ENCODE measurements at regions of chr21 and their contacts with region 1.

Region 1: GRCh38 chr21:33578959-33579542 is 9.4 kb downstream of the DONSON start:
- DNase-seq: peak; percentile 30
- ATAC-seq: peak; percentile 23
- H3K4me3 ChIP-seq: no peak overlapping the region
- H3K27ac ChIP-seq: 0 out of 2 replicates have a peak overlapping the region, but pooled peaks have one; percentile 27
- H3K4me1 ChIP-seq: peaks cover 9% of the 10 kb centered on the region; the same call in 1 of the 2 replicates
- H3K27me3 ChIP-seq: no peaks in the 10 kb centered on the region
- CTCF ChIP-seq: no peak

Region 2: GRCh38 chr21:34046917-34047316 is 467.9 kb after region 1 on chr21:
- CTCF ChIA-PET with region 1: no interaction called
- POLR2A ChIA-PET with region 1: no interaction called
- intact Hi-C with region 1: no loop called
- DNase-seq: no peak
- ATAC-seq: no peak
- H3K4me3 ChIP-seq: no peak overlapping the region
- H3K27ac ChIP-seq: no peak overlapping the region
- H3K4me1 ChIP-seq: no peaks in the 10 kb centered on the region
- H3K27me3 ChIP-seq: no peaks in the 10 kb centered on the region
- CTCF ChIP-seq: no peak

Region 3: GRCh38 chr21:34166468-34166867 is 587.4 kb after region 1 on chr21:
- CTCF ChIA-PET with region 1: no interaction called
- POLR2A ChIA-PET with region 1: interaction called, 18 read pairs
- intact Hi-C with region 1: no loop called
- DNase-seq: no peak
- ATAC-seq: no peak
- H3K4me3 ChIP-seq: no peak overlapping the region
- H3K27ac ChIP-seq: no peak overlapping the region
- H3K4me1 ChIP-seq: no peaks in the 10 kb centered on the region
- H3K27me3 ChIP-seq: no peaks in the 10 kb centered on the region
- CTCF ChIP-seq: no peak